CD4-positive, alpha-beta memory T cell (primary cell): ENCODE measurements at regions of chr17 and their contacts with region 1.

Region 1: DNA sequence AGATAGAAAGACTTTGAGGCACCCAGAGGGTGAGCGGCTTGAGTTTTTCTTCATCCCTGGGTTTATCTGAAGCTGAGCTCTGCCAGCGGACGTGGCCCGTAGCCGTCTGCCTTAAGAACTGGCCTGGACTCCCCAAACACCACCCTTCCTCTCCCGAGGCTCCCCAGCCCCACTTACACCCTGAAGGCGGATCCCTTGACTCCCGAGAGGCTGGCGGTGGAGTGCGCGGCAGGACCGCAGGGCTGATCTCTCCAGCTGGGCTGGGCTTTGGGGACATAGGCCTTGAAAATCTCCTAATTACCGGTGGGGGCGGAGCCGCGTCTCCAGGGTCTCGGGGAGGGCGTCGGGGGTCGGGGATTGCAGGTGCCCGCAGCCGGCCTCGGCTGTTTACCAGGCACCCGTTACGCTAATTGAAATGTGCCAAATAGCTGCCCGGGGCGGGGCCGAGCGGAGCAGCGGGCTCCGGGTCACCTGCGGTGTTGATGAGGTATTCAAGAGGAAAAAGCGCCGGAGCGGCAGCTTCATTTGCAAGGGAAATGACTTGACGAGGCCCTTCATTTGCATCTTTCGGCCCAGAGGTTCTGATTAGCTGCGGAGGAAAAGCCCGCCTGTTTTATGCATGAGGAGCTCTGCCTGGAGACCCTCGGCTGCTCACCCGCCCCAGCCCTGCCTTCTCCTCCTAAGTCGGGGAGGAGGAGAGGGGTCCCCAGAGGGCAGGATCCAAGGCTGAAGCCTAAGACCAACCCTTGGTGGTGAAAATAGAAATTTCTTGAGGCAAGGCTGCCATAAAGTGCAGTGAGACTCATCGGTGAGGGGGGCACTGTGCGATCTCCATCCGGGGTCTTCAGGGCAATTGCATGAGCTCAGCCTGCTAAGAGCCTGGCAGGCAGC is 100.7 kb downstream of the MGAT5B start:
- DNase-seq: peak; percentile 45 to 62 (median 49)
- H3K4me3 ChIP-seq: peak overlapping the region; percentile 52 to 63
- H3K4me3 Mint-ChIP-seq: peak overlapping the region; percentile 75 to 92 (median 86)
- H3K27ac ChIP-seq: no peak overlapping the region
- H3K27ac Mint-ChIP-seq: peak overlapping the region; percentile 55 to 93 (median 84)
- H3K4me1 ChIP-seq: peaks cover 11% of the 10 kb centered on the region
- H3K4me1 Mint-ChIP-seq: peaks cover 6 to 40% (median 18%) of the 10 kb centered on the region in 4 donors
- H3K27me3 ChIP-seq: no peaks in the 10 kb centered on the region
- H3K27me3 Mint-ChIP-seq: peaks cover 2 to 5% of the 10 kb centered on the region in 2 donors

Region 2: GRCh38 chr17:76397687-76398487 is 571.1 kb before region 1 on chr17:
- CTCF ChIA-PET with region 1: no interaction called
- POLR2A ChIA-PET with region 1: no interaction called
- intact Hi-C with region 1: no loop called
- DNase-seq: peak; percentile 73 to 76 (median 74)
- H3K4me3 ChIP-seq: no peak overlapping the region
- H3K4me3 Mint-ChIP-seq: no peak overlapping the region
- H3K27ac ChIP-seq: no peak overlapping the region
- H3K27ac Mint-ChIP-seq: peak overlapping the region in 4 of 7 donors; percentile 5 to 82 (median 51)
- H3K4me1 ChIP-seq: no peaks in the 10 kb centered on the region
- H3K4me1 Mint-ChIP-seq: peaks cover 0 to 4% (median 2%) of the 10 kb centered on the region in 4 donors
- H3K27me3 ChIP-seq: no peaks in the 10 kb centered on the region
- H3K27me3 Mint-ChIP-seq: no peaks in the 10 kb centered on the region

Region 3: DNA sequence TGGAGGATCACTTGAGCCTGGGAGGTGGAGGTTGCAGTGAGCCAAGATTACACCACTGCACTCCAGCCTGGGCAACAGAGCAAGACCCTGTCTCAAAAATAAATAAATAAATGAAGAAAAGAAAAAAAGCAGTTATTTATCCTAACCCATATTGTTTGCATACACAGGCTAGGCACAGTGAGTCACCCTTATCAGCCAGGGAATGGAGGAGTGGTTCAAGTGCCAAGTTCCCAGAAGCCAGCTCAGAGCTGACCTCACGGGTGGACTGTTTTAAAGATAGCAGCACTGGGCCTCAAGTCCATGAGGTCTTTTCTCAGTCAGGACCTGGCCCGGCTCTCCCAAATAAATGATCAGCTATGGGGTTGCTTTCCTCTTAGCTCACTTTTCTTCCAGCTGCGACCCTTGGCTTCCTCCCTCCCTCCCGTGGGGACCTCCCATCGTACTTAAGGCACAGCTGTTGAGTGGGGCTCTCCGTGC is 123.4 kb before region 1 on chr17:
- CTCF ChIA-PET with region 1: no interaction called
- POLR2A ChIA-PET with region 1: no interaction called
- intact Hi-C with region 1: no loop called
- DNase-seq: no peak
- H3K4me3 ChIP-seq: no peak overlapping the region
- H3K4me3 Mint-ChIP-seq: no peak overlapping the region
- H3K27ac ChIP-seq: no peak overlapping the region
- H3K27ac Mint-ChIP-seq: no peak overlapping the region
- H3K4me1 ChIP-seq: peaks cover 12% of the 10 kb centered on the region
- H3K4me1 Mint-ChIP-seq: peaks cover 0 to 8% (median 4%) of the 10 kb centered on the region in 4 donors
- H3K27me3 ChIP-seq: peaks cover 24% of the 10 kb centered on the region
- H3K27me3 Mint-ChIP-seq: peaks cover 27 to 45% of the 10 kb centered on the region in 2 donors

Region 4: DNA sequence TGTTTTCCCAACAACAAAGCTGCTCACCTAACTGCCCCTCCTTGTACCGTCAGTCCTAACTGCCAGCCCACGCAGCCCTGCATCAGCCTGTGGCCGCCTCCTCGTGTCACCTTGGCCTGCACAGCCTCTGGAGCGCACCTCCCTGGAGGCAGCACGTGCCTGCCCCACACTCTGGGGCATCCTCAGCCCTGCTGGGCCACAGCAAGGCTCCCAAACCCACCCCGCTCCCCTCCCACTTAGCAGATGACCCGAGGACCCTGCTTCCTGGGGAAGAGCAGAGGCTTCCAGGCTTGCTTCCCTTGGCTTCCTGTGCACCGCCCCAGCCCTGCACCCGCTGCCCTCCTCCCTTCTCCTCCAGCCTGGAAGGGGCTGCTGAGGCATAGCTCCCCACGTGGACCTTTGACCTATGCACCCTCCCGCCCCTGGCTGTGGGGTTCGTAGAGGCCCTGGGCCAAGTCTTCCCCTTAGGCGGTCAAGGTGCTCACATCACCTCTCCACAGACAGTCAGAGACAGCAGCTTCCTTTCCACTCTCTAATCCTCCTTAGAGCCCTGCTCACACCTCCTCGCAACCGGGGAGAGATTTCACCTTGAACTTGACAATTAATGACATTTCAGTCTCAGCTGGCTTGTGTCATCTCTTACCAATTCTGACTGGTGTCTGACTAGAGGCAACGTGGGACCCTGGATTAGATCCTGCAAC is 14.3 kb after region 1 on chr17:
- CTCF ChIA-PET with region 1: interaction called, 3 read pairs
- POLR2A ChIA-PET with region 1: interaction called, 16 read pairs
- intact Hi-C with region 1: no loop called
- DNase-seq: no peak
- H3K4me3 ChIP-seq: no peak overlapping the region
- H3K4me3 Mint-ChIP-seq: peak overlapping the region in 7 of 8 donors; percentile 21 to 77 (median 64)
- H3K27ac ChIP-seq: peak overlapping the region; percentile 44
- H3K27ac Mint-ChIP-seq: peak overlapping the region; percentile 64 to 95 (median 91)
- H3K4me1 ChIP-seq: peaks cover 27% of the 10 kb centered on the region
- H3K4me1 Mint-ChIP-seq: peaks cover 11 to 41% (median 19%) of the 10 kb centered on the region in 4 donors
- H3K27me3 ChIP-seq: no peaks in the 10 kb centered on the region
- H3K27me3 Mint-ChIP-seq: no peaks in the 10 kb centered on the region

Region 5: DNA sequence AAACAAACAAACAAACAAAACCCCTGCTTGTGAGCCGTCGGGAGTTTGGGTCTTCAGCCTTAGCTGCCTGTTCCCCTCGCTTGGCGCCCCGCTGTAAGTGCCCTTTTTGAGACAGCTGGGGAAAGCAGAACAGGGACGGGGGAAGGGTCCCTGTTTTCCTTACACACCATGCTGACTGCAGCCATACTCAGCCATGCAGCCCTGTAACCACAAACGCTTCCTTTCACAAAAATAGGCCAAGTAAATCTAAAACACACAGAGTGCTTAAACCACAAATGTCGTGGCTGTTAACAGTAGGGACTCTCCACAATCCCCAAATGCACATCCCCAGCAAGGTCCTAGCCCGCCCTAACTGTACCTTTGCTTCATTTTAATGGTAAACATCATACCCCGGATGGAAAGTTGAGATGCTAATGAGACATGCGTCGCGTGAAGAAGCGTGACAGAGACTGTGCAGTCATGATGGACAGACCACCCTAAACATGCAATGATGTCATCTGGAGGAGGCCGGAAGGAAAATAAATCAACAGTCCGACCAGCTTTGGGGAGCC is 29.1 kb after region 1 on chr17:
- CTCF ChIA-PET with region 1: no interaction called
- POLR2A ChIA-PET with region 1: interaction called, 37 read pairs
- intact Hi-C with region 1: no loop called
- DNase-seq: peak; percentile 82 to 90 (median 86)
- H3K4me3 ChIP-seq: peak overlapping the region; percentile 5 to 22
- H3K4me3 Mint-ChIP-seq: peak overlapping the region; percentile 52 to 80 (median 68)
- H3K27ac ChIP-seq: peak overlapping the region; percentile 79
- H3K27ac Mint-ChIP-seq: peak overlapping the region; percentile 87 to 96 (median 93)
- H3K4me1 ChIP-seq: peaks cover 55% of the 10 kb centered on the region
- H3K4me1 Mint-ChIP-seq: peaks cover 33 to 70% (median 50%) of the 10 kb centered on the region in 4 donors
- H3K27me3 ChIP-seq: no peaks in the 10 kb centered on the region
- H3K27me3 Mint-ChIP-seq: no peaks in the 10 kb centered on the region

Region 6: DNA sequence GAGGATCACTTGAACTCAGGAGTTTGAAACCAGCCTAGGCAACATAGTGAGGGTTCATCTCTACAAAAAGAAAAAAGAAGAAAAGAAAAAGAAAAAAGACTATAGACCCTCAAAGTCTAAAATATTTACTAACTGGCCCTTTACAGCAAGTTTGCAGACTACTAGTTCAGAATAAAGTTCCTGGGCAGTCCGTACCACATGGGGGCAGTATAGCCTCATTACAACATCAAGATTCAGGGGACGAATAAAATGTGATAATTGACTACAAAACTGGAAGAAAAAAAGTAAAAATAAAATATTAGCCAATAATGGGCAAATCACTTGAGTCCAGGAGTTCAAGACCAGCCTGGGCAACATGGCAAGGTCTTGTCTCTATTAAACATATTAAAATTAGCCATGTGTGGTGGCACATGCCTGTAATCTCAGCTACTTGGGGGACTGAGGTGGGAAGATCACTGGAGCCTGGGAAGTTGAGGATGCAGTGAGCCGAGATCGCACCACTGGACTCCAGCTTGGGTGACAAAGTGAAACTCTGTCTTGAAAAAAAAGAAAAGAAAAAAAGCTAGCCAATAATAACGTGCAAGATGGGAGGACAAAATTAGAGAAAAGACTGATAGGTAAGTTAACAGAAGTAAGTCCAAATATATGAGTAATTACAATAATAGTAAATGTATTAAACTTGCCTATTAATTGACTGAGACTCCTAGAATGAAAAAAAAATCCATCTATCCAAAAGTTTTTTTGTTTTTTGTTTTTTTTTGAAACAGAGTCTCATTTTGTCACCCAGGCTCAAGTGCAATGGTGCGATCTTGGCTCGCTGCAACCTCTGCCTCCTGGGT is 42.4 kb after region 1 on chr17:
- CTCF ChIA-PET with region 1: interaction called, 5 read pairs
- POLR2A ChIA-PET with region 1: interaction called, 5 read pairs
- intact Hi-C with region 1: loop called (anchors 2 kb)
- DNase-seq: peak; percentile 39 to 54 (median 48)
- H3K4me3 ChIP-seq: no peak overlapping the region
- H3K4me3 Mint-ChIP-seq: no peak overlapping the region
- H3K27ac ChIP-seq: no peak overlapping the region
- H3K27ac Mint-ChIP-seq: no peak overlapping the region
- H3K4me1 ChIP-seq: no peaks in the 10 kb centered on the region
- H3K4me1 Mint-ChIP-seq: peaks cover 0 to 3% (median under 1%) of the 10 kb centered on the region in 4 donors
- H3K27me3 ChIP-seq: no peaks in the 10 kb centered on the region
- H3K27me3 Mint-ChIP-seq: peaks cover 5% of the 10 kb centered on the region in 2 donors